ENCODE measurements at regions of chr5 and their contacts with region 1.

Region 1: GRCh38 chr5:140383300-140383699 is 18.3 kb upstream of the ANKHD1 start:
- DNase-seq: no peak
- H3K4me3 Mint-ChIP-seq: no peak overlapping the region
- H3K27ac Mint-ChIP-seq: no peak overlapping the region
- H3K4me1 Mint-ChIP-seq: peaks cover 9% of the 10 kb centered on the region
- H3K27me3 Mint-ChIP-seq: no peaks in the 10 kb centered on the region
- CTCF ChIP-seq: no peak

Region 2: DNA sequence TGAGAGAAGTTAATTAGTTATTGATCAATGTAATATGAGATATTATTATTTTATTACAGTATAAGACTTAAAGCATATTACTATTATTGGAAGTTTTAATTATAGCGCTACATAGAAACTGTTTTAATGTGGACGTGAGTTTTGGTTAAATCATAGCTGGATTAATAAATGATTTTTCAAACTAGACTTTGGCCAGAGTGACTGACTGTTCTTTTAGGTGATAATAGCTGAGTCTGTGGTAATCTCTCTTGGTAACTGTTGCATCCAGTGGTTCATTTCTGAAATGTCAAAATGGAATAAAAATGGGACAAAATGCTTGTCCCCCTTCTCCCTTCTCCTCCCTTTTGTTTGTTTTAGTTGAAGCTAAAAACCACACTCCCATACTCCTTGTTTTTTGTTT is 46.4 kb after region 1 on chr5:
- CTCF ChIA-PET with region 1: interaction called, 11 read pairs
- intact Hi-C with region 1: no loop called
- DNase-seq: no peak
- H3K4me3 Mint-ChIP-seq: no peak overlapping the region
- H3K27ac Mint-ChIP-seq: no peak overlapping the region
- H3K4me1 Mint-ChIP-seq: no peaks in the 10 kb centered on the region
- H3K27me3 Mint-ChIP-seq: no peaks in the 10 kb centered on the region
- CTCF ChIP-seq: no peak

Measured in Calu3 (cell line).